ENCODE measurements at regions of chr4 and their contacts with region 1.

Region 1: DNA sequence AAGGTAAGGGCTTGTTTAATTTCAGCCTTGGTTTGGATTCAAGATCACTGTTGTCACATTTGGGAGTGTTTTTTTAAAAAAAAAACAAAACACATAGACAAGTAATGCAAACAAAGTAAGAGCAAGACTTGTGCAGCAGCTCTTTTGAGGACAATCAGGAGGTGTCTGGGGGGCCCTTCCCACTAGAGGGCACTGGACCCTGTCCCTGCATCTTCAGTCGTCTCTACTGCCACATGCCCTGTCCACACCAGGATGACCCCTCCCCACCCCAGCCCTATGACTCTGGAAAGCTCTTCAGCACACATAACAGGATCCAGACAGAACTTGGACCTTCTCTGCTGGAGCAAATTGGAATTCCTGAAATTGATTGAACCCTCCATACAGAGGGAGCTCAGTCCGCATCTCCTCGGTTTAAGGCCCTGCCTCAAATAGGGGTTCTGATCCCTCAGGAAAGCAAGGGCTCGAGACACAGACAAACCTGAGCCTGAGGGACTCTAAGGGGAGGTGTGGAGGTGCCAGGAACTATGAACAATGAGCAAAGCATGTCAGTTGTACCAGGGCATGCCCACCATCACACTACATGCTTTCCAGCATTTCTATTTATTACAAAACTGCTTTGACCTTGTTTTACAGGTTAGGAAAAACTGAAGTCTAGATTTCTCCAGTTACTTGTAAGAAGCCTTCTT is 70.9 kb downstream of the USP46 start:
- DNase-seq: no peak
- H3K4me3 Mint-ChIP-seq: no peak overlapping the region
- H3K27ac Mint-ChIP-seq: peak overlapping the region; percentile 53
- H3K4me1 Mint-ChIP-seq: peaks cover 17% of the 10 kb centered on the region
- H3K27me3 Mint-ChIP-seq: peaks cover 3% of the 10 kb centered on the region

Region 2: DNA sequence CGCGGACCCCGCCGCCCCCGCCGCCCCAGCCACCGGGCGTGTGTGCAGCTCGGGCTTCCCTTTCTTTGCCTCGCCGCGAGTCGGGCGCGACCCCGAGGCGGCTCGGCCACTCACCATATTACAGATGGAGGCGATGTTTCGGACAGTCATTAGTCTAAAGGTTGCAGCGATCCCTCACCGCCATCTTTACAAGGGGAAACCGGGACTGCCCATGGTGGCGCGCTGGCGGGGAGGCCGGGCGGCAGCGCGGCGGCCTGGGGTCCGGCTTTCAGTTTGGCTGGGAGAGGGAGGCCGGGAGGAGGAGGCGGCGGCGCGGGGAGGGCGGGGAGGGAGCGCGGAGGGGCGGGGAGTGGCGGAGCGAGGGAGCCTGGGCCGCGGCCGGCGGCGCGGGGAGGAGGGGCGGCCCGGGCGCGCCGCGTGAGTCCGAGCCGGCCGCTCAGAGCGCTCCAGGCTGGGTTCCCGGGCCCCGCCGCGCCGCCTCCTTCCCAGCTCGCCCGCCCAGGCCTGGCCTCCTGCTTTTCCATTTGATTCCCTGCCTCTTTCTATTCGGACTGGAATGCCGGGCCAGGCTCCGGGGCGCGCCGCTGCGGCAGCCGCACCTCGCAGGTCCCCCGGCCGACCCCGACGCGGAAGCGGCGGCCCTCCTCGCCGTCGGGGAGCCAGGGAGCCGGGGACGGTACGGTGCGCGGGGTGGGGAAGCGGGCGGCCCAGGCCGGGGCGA is 70.9 kb after region 1 on chr4 and contains the start of gene USP46:
- intact Hi-C with region 1: loop called (anchors 5 kb)
- DNase-seq: peak; percentile 28
- H3K4me3 Mint-ChIP-seq: peak within 1 kb of the TSS; percentile 82
- H3K27ac Mint-ChIP-seq: peak within 1 kb of the TSS; percentile 62
- H3K4me1 Mint-ChIP-seq: peaks cover 15% of the 10 kb centered on the region
- H3K27me3 Mint-ChIP-seq: peaks cover 10% of the 10 kb centered on the region
- total RNA-seq, gene USP46: 7.7 and 8.9 TPM in 2 replicates

Region 3: GRCh38 chr4:52728691-52729240 is 140.5 kb after region 1 on chr4:
- intact Hi-C with region 1: no loop called
- DNase-seq: no peak
- H3K4me3 Mint-ChIP-seq: no peak overlapping the region
- H3K27ac Mint-ChIP-seq: no peak overlapping the region
- H3K4me1 Mint-ChIP-seq: no peaks in the 10 kb centered on the region
- H3K27me3 Mint-ChIP-seq: peaks cover 4% of the 10 kb centered on the region

Measured in activated T-helper 2 cell treated with anti-CD3 and anti-CD28 coated beads, Interferon-gamma antibody, Interleukin-2, Interleukin-4, amounts not matched to agents 10 μg/mL and 5 μg/mL and 100 μg/mL, durations not matched to agents 14 hours and 24 hours and 36 hours (primary cell).